Activated CD4-positive, alpha-beta T cell treated with anti-CD3 and anti-CD28 coated beads for 36 hours (primary cell): ENCODE measurements at regions of chr1 and their contacts with region 1.

Region 1: GRCh38 chr1:161132410-161133219 is at the start of gene DEDD:
- DNase-seq: peak; percentile 95
- ATAC-seq: peak; percentile 97
- H3K4me3 Mint-ChIP-seq: no peak within 1 kb of the TSS
- H3K27ac Mint-ChIP-seq: peak within 1 kb of the TSS; percentile 62
- H3K4me1 Mint-ChIP-seq: peaks cover 44% of the 10 kb centered on the region
- H3K27me3 Mint-ChIP-seq: no peaks in the 10 kb centered on the region
- total RNA-seq, gene DEDD: 33.9 to 44.9 TPM

Region 2: DNA sequence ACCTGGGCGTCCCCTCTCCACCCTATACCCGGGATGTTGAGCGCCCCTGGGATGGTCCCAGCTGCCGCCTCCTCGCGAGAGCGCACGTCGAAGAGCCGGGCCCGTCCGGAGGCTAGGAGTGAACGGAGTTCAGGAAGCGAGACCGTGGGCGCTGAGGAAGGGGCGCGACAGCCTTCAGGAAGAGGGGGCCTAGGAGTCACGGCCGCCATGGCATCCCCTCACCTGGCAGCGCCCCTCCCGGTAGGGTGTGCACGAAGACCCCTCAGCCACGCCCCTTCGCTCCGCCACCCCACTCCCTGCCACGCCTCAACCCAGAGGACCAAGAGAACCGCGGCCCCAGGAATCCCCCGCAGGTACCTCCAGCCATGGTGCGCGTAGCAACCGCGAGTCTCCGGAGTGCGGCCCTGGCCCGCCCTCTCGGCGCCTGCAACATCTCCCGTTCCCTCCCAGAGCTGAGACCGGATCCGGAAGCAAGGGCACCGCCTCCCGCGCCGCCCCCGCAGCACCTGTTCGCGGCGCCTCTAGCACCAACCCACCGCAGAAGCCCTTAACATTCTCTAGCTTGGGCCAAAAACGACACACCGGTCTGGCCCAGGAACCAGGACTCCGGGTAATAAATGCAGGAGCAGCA is 94.0 kb before region 1 on chr1 and contains the start of gene TSTD1:
- CTCF ChIA-PET with region 1: interaction called, 3 read pairs
- POLR2A ChIA-PET with region 1: no interaction called
- intact Hi-C with region 1: loop called in 1 of 2 experiments (anchors 2 kb)
- DNase-seq: peak; percentile 95
- ATAC-seq: peak; percentile 90
- H3K4me3 Mint-ChIP-seq: peak within 1 kb of the TSS; percentile 86
- H3K27ac Mint-ChIP-seq: peak within 1 kb of the TSS; percentile 91
- H3K4me1 Mint-ChIP-seq: peaks cover 34% of the 10 kb centered on the region
- H3K27me3 Mint-ChIP-seq: no peaks in the 10 kb centered on the region
- total RNA-seq, gene TSTD1: 26.0 to 42.8 TPM

Region 3: DNA sequence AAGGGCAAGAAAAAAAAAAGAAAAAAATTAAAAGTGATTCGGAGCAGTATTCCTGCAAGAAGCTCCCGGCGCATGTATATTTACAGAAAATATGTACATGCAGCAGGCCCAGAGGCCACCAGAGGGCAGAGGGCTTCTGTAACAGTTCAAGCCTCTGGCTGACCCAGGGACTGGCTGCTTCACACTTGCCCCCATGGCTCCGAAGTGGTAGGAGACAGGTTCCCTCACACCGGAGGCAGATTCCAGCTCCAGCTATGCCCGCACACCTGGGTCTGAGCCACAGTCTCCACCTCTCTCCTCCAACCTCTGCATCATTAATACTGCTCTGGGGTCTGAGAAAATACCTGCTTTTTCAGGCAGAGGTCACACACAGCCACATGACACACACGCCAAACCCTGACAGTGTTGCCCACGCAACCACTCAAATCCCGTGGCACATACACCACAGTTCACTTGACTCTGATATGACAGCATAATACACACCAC is 60.7 kb before region 1 on chr1:
- CTCF ChIA-PET with region 1: interaction called, 11 read pairs
- POLR2A ChIA-PET with region 1: interaction called, 3 read pairs
- intact Hi-C with region 1: loop called (anchors 1 kb)
- DNase-seq: peak; percentile 75
- ATAC-seq: no peak
- H3K4me3 Mint-ChIP-seq: no peak overlapping the region
- H3K27ac Mint-ChIP-seq: peak overlapping the region; percentile 19
- H3K4me1 Mint-ChIP-seq: peaks cover 35% of the 10 kb centered on the region
- H3K27me3 Mint-ChIP-seq: no peaks in the 10 kb centered on the region

Region 4: DNA sequence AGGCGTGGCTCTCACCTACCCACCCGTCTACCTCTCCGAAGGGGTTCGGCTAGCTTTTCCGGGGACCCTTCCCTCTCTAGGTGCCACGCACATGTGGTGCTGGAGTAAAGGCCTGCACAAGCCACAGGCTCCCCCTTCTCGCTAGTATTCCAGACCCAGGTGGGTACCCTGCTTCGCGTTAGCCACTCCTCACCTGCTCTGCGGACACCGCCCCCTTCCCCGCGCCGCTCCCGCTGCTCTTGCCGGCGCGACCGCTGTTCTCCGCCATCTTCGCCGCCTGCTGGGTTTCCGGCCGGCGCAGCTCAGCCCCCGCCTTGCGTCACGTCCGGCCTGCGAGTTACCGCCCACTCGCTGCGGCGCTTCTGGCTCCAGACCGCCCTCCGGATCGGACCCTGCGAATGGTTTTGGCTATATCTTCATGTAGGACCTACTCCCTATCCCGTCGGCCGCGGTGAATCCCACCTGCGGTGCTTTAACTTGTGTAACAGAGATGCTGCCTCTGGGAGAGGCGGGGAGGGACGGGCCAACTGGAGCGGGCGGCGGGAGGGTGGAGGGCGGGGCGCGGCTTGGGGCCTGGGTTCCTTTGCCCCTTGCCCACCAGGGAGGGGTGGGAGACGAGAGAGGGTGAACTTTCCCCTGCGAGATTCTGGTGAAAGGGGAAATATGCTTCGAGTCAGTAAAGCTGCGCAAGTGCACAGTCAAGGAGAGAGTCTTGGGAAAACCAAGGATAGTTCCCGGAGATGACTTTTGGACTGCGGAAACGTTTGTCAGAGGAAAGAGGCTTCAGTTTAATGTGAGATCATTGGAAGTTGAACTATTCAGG is 14.6 kb before region 1 on chr1 and contains the starts of genes NIT1 and PFDN2:
- CTCF ChIA-PET with region 1: interaction called, 5 read pairs
- POLR2A ChIA-PET with region 1: interaction called, 7 read pairs
- intact Hi-C with region 1: loop called (anchors 1 kb)
- DNase-seq: peak; percentile 94
- ATAC-seq: peak; percentile 53
- H3K4me3 Mint-ChIP-seq: peak within 1 kb of the TSS; percentile 94
- H3K27ac Mint-ChIP-seq: peak within 1 kb of the TSS; percentile 98
- H3K4me1 Mint-ChIP-seq: peaks cover 75% of the 10 kb centered on the region
- H3K27me3 Mint-ChIP-seq: no peaks in the 10 kb centered on the region
- total RNA-seq, gene NIT1: 58.2 to 62.1 TPM
- total RNA-seq, gene PFDN2: 108 to 136 TPM

Region 5: DNA sequence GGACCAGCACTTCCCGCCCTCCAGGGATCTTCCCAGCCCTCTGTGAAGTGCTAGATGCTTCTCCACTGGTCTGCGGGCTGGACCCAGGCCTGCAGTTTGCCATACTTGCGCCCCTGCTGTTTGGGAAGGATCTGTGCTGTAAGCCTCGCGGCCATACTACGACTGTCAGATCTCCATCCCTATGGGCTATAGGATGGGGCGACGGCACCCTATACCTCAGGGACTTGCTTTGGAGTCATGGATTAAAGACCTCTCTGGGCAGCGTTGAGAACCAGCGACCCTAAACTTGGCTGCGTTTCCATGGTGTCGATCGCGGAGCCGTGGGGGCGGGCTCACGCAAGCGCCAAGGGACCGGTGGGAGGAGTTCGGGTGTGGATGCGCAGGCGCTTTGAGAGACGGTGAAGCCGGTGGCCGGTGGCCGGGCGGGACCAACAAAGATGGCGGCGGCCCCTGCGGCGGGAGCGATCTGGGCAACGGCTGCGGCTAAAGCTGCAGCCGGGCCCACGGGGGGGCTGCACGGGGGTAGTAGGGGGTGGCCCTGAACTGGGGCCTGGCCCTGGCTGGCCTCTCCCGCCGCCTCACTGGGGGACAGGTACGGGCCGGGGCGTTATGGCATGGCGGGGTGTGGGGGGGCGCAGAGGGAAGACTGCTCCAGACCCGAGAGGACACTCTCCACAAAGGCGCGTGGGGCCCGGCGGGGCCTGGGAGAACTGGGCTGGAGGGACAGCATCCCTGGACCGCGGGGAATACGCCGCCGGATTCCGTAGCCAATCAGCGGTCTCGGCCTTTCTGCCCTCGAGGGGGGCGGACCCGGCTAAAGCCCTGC is 26.7 kb after region 1 on chr1 and contains the start of gene USP21:
- CTCF ChIA-PET with region 1: interaction called, 14 read pairs
- POLR2A ChIA-PET with region 1: interaction called, 15 read pairs
- intact Hi-C with region 1: loop called in 1 of 2 experiments (anchors 1 kb)
- DNase-seq: peak; percentile 95
- ATAC-seq: peak; percentile 96
- H3K4me3 Mint-ChIP-seq: peak within 1 kb of the TSS; percentile 79
- H3K27ac Mint-ChIP-seq: peak within 1 kb of the TSS; percentile 82
- H3K4me1 Mint-ChIP-seq: peaks cover 50% of the 10 kb centered on the region
- H3K27me3 Mint-ChIP-seq: no peaks in the 10 kb centered on the region
- total RNA-seq, gene USP21: 25.1 to 32.0 TPM

Region 6: DNA sequence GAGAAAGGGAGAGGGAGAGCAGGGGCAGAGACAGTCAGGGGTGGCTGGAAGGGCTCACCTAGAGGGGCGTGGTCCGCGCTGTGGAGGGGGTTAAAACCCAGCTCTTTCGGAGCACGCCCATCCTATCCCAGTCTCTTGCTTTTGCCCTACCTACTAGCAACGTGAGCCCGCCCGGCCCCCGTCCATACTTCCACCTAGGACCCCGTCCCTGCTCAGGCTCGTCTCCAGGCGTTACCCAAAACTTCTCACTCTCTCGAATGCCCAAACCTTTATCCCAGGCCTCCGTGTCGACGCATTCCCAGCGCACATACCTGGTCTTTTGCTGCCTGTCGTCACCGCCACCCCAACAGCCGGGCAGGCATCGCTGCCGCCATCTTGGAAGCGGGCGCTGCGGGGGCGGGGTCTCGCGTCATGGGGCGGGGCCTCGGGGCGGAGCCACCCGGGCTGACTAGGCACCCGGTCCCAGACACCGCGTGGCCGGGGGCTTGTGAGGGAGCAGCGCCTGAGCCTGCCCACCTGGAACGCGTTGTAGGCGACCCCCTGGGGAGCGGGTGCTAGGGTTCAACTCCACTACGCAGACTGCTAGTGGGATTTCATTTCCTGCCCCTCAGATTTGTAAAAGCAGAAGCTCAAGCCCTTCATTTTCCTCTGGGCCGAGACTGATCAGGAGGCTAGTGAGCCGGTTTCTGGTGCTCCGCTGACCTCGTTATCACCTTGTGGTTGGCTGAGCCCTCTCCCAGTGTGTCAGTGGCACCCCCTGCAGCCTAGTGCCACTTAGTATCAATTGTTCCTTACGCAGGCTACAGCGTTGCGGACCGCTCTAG is 44.7 kb after region 1 on chr1 and contains the start of gene B4GALT3:
- CTCF ChIA-PET with region 1: interaction called, 3 read pairs
- POLR2A ChIA-PET with region 1: interaction called, 5 read pairs
- intact Hi-C with region 1: loop called in 1 of 2 experiments (anchors 1 kb)
- DNase-seq: peak; percentile 98
- ATAC-seq: peak; percentile 86
- H3K4me3 Mint-ChIP-seq: peak within 1 kb of the TSS; percentile 91
- H3K27ac Mint-ChIP-seq: peak within 1 kb of the TSS; percentile 98
- H3K4me1 Mint-ChIP-seq: peaks cover 57% of the 10 kb centered on the region
- H3K27me3 Mint-ChIP-seq: no peaks in the 10 kb centered on the region
- total RNA-seq, gene B4GALT3: 40.5 to 51.8 TPM

Region 7: GRCh38 chr1:161389691-161390558 is 257.3 kb after region 1 on chr1:
- CTCF ChIA-PET with region 1: no interaction called
- POLR2A ChIA-PET with region 1: no interaction called
- intact Hi-C with region 1: loop called in 1 of 2 experiments (anchors 1 kb)
- DNase-seq: peak; percentile 97
- ATAC-seq: peak; percentile 83
- H3K4me3 Mint-ChIP-seq: peak overlapping the region; percentile 87
- H3K27ac Mint-ChIP-seq: peak overlapping the region; percentile 96
- H3K4me1 Mint-ChIP-seq: peaks cover 43% of the 10 kb centered on the region
- H3K27me3 Mint-ChIP-seq: no peaks in the 10 kb centered on the region